Activated naive CD4-positive, alpha-beta T cell treated with anti-CD3 and anti-CD28 coated beads for 36 hours (primary cell): ENCODE measurements at regions of chr12 and their contacts with region 1.

Region 1: DNA sequence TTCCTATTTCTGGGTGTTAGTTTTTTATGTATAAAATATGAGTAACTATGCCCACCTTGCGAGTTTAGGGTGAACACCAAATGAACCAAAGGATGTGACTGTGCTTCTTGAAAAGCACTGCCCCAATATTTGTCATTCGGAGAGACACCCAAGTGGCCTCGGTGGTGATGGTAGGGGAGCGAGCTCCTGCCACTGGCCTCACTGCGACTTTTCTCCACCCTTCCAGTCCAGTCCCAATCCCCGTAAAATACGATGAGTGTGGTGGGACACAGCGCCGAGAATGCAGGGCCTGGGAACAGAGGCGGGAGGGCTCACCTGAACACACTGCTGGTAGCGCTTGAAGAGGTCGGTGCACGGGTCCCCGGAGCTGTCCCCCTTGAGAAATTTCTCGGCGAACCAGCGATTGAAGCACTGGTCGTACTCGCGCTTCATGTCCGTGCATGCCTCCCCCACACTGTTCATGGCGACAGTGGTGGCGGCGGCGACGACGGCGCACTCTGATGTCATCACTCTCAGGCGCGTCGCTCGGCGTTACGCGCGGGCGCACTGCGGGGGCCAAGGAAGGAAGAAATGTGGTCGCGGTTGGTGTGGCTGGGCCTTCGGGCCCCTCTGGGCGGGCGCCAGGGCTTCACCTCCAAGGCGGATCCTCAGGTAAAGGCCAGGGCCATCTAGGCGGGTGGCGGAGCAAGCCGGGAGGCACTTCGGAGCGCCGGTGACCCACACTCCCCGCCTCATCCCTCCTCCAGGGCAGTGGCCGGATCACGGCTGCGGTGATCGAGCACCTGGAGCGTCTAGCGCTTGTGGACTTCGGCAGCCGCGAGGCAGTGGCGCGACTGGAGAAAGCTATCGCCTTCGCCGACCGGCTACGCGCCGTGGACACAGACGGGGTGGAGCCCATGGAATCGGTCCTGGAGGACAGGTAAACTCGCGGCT is at the starts of genes GATC and TRIAP1:
- DNase-seq: peak; percentile 90
- H3K4me3 Mint-ChIP-seq: peak within 1 kb of the TSS; percentile 95
- H3K27ac Mint-ChIP-seq: peak within 1 kb of the TSS; percentile 95
- H3K4me1 Mint-ChIP-seq: peaks cover 47% of the 10 kb centered on the region
- H3K27me3 Mint-ChIP-seq: no peaks in the 10 kb centered on the region
- total RNA-seq, gene GATC: 33.1 to 35.3 TPM
- total RNA-seq, gene TRIAP1: 56.8 to 59.2 TPM

Region 2: DNA sequence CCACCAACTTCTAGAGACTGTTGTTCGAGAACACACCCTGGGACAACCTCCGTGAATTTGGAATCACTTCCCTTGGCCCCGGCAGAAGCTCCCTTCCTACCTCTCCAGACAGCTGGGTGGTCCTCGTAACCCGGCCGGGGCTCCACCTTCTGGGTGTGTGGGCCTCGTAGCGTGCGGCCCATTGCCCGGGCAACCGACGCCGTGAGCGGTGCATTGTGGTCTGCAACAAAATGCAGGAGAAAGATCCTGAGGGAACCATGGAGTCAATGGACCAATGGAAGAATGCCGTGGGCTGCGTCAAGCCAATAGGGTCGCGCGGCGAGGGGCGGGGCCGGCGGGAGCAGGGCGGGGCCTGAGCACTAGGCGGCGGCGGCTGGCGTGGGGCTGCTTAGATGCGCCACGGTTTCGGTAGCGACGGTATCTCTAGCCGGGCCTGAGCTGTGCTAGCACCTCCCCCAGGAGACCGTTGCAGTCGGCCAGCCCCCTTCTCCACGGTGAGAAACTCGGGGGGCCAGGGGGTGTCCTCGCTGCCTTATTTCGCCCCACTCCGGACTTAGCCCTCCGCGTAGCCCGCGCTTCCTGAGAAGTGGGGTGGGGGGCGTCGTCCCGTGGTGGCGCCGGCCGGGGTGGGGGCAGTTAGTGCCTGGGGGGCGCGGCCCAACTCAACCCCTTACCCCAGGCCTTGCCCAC is 49.7 kb after region 1 on chr12 and contains the start of gene DYNLL1:
- CTCF ChIA-PET with region 1: no interaction called
- intact Hi-C with region 1: loop called (anchors 2 kb)
- DNase-seq: peak; percentile 97
- H3K4me3 Mint-ChIP-seq: peak within 1 kb of the TSS; percentile 84
- H3K27ac Mint-ChIP-seq: peak within 1 kb of the TSS; percentile 77
- H3K4me1 Mint-ChIP-seq: peaks cover 21% of the 10 kb centered on the region
- H3K27me3 Mint-ChIP-seq: no peaks in the 10 kb centered on the region
- total RNA-seq, gene DYNLL1: 93.4 to 93.5 TPM

Region 3: DNA sequence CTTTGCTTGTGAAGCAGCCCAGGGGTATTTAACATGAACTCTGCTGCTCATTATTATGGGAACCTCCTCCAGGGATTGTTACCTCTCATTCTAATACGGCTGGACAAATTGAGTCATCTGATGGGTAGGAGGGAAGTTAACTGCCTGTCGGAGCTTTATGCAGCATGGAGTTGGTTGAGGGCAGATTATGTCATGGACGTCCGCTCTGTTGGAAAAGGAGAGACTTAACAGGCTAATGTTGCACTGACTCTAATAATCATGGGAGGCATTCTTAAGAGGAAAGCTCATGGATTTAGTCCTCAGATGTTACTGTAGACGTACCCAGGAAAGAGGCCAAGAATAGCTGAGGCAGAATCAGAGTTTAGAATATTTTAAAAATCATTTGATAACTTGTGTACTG is 125.1 kb after region 1 on chr12:
- CTCF ChIA-PET with region 1: no interaction called
- intact Hi-C with region 1: no loop called
- DNase-seq: no peak
- H3K4me3 Mint-ChIP-seq: no peak overlapping the region
- H3K27ac Mint-ChIP-seq: no peak overlapping the region
- H3K4me1 Mint-ChIP-seq: no peaks in the 10 kb centered on the region
- H3K27me3 Mint-ChIP-seq: no peaks in the 10 kb centered on the region

Region 4: GRCh38 chr12:121170611-121171260 is 724.6 kb after region 1 on chr12:
- CTCF ChIA-PET with region 1: no interaction called
- intact Hi-C with region 1: no loop called
- DNase-seq: no peak
- H3K4me3 Mint-ChIP-seq: no peak overlapping the region
- H3K27ac Mint-ChIP-seq: no peak overlapping the region
- H3K4me1 Mint-ChIP-seq: no peaks in the 10 kb centered on the region
- H3K27me3 Mint-ChIP-seq: no peaks in the 10 kb centered on the region